Ovary (tissue), 10 donors: ENCODE measurements at regions of chr5 and their contacts with region 1.

Region 1: GRCh38 chr5:145110834-145111233 is 724.3 kb downstream of the PRELID2 start:
- DNase-seq: no peak
- H3K4me3 ChIP-seq: no peak overlapping the region
- H3K27ac ChIP-seq: no peak overlapping the region
- H3K4me1 ChIP-seq: no peaks in the 10 kb centered on the region
- H3K27me3 ChIP-seq: no peaks in the 10 kb centered on the region
- CTCF ChIP-seq: no peak
- EP300 ChIP-seq: no peak
- POLR2A ChIP-seq: no peak

Region 2: DNA sequence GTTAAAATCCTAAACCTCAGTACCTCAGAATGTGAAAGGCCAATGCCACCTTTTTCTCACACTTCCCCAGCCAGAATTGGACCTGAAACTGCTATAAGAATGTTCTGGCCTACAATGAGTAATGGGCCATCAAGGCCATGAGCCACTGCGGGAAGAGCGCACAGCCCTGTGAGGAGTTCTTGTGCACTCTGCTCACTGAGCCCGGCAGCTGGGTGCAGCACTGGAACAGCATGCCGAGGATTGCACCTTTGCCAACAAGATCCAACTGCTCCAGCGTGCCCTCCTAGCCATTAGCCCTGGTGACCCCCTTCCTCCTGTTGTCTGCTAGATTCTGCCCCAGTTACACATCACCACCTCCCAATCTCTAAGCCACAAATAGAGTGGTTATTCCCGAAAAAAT is 33.8 kb before region 1 on chr5:
- intact Hi-C with region 1: loop called in 1 of 4 experiments (anchors 1 kb)
- DNase-seq: no peak
- H3K4me3 ChIP-seq: no peak overlapping the region
- H3K27ac ChIP-seq: no peak overlapping the region
- H3K4me1 ChIP-seq: no peaks in the 10 kb centered on the region
- H3K27me3 ChIP-seq: no peaks in the 10 kb centered on the region
- CTCF ChIP-seq: no peak
- EP300 ChIP-seq: no peak
- POLR2A ChIP-seq: no peak